Heart left ventricle (tissue), 16 donors: ENCODE measurements at regions of chr12 and their contacts with region 1.

Region 1: GRCh38 chr12:32462908-32463307 is 63.5 kb downstream of the FGD4 start:
- DNase-seq: no peak
- ATAC-seq: no peak
- H3K4me3 ChIP-seq: no peak overlapping the region
- H3K27ac ChIP-seq: no peak overlapping the region
- H3K4me1 ChIP-seq: peaks cover 0 to 21% (median 5%) of the 10 kb centered on the region in 12 donors
- H3K27me3 ChIP-seq: no peaks in the 10 kb centered on the region
- CTCF ChIP-seq: no peak
- POLR2A ChIP-seq: no peak

Region 2: DNA sequence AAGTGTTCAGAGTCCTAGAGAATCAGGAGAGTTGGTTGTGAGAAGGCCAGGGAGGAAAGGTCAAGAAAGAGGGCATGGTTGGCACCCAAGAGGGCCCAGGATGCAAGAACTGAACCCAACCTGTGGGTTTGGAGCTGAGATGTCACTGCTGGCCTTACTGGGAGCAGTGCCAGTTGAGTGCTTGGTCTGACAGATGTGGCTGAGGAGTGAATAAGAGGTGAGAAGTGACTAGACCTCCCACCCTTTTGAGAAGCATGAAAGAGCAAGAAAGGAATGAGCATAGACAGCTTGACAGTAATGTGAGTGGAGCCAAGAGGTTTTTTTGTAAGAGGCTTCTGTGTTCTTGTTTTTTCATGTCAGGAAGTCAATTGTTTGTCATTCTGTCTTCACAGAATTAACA is 31.7 kb after region 1 on chr12:
- intact Hi-C with region 1: loop called in 1 of 10 experiments (anchors 5 kb)
- DNase-seq: no peak
- ATAC-seq: no peak
- H3K4me3 ChIP-seq: no peak overlapping the region
- H3K27ac ChIP-seq: no peak overlapping the region
- H3K4me1 ChIP-seq: peaks cover 0 to 64% (median 18%) of the 10 kb centered on the region in 12 donors
- H3K27me3 ChIP-seq: no peaks in the 10 kb centered on the region
- CTCF ChIP-seq: no peak
- POLR2A ChIP-seq: no peak